AG04450 (cell line): ENCODE measurements at regions of chr16 and their contacts with region 1.

Region 1: DNA sequence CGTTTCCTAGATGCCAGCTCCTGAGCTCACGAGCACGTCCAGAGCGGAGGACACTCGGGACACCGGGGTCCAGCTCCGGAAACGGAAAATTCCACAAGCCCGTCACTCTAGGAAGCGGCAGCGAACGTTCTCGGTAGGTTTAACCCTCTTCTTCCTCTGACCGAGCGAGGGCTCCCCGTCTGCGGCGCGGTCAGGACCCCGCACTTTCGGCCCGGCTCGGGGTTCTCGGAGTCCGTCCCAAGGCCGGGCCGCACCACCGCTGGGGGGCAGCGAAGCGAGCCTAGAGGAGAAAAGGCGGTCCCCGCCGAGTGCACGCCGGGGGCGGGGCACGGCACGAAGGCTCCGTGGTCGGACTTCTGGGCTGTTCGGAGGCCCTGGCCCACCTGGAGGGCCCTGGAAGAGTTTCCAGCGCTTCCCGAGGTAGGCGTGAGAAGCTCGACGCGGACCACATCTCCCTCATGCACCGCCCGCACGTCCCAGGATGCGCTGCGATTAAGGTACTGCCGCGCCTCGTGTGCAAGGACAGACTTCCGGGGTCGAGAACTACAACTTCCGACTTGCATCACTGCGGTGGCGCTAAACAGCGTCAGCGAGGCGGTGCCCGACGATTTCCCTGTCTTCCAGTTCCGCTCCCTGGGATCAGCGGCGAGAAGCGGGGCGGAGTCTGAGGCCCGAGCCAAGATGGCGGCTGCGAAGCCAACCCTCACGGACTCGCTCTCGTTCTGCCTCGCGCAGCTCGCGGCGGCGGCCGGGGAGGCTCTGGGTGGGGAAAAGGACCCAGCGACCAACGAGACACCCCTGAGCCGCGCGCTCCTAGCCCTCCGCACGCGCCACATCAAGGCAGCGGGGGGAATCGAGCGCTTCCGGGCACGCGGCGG is at the start of gene ARMC5:
- DNase-seq: peak; percentile 97
- H3K4me3 ChIP-seq: peak within 1 kb of the TSS; percentile 87
- H3K27ac ChIP-seq: peak within 1 kb of the TSS; percentile 99
- H3K27me3 ChIP-seq: no peaks in the 10 kb centered on the region
- CTCF ChIP-seq: peak; percentile 68
- polyA plus RNA-seq, gene ARMC5: 2.9 and 4.2 TPM in 2 replicates

Region 2: DNA sequence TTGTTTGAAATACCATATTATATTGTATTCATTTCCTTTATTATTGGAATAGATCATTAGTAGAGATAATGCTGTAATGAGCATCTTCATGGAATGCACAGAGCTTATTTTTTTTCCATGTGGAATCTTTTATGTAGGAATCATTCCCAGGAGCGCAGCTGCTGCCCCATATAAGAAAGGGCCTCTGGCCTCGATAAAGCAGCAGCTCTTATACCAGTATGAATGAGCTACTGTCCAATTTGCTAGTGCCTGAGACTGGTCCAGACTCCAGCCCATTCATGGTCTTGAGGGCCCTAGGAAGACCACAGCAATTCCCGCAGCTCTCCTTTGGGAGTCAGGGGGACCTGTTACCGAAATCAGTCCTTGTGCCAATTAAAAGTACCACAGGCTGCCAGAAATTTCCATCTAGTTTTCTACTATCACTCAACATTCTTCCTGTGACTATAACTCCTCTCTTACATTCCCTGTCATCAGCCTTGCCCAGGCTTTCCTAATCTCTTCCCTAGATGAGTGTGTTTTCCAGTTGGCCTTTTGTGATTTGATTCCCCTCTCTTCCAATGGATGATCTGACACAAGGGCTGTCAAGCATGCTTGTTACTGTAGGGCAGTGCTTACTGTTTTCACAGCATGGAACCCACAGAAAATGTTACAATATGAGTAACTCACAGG is 18.4 kb before region 1 on chr16:
- CTCF ChIA-PET with region 1: interaction called, 33 read pairs
- POLR2A ChIA-PET with region 1: interaction called, 11 read pairs
- DNase-seq: no peak
- H3K4me3 ChIP-seq: no peak overlapping the region
- H3K27ac ChIP-seq: no peak overlapping the region
- H3K27me3 ChIP-seq: peaks cover 2% of the 10 kb centered on the region
- CTCF ChIP-seq: no peak

Region 3: GRCh38 chr16:31472709-31473203 is 13.7 kb after region 1 on chr16:
- CTCF ChIA-PET with region 1: interaction called, 49 read pairs
- POLR2A ChIA-PET with region 1: interaction called, 44 read pairs
- DNase-seq: peak; percentile 69
- H3K4me3 ChIP-seq: peak overlapping the region; percentile 85
- H3K27ac ChIP-seq: peak overlapping the region; percentile 99
- H3K27me3 ChIP-seq: no peaks in the 10 kb centered on the region
- CTCF ChIP-seq: peak; percentile 70

Region 4: GRCh38 chr16:31507929-31508705 is 49.0 kb after region 1 on chr16 and contains the start of gene RUSF1:
- CTCF ChIA-PET with region 1: interaction called, 7 read pairs
- POLR2A ChIA-PET with region 1: interaction called, 22 read pairs
- DNase-seq: peak; percentile 65
- H3K4me3 ChIP-seq: peak within 1 kb of the TSS; percentile 93
- H3K27ac ChIP-seq: peak within 1 kb of the TSS; percentile 94
- H3K27me3 ChIP-seq: no peaks in the 10 kb centered on the region
- CTCF ChIP-seq: no peak
- polyA plus RNA-seq, gene RUSF1: 32.2 and 38.6 TPM in 2 replicates